ENCODE measurements at regions of chr18 and their contacts with region 1.

Region 1: GRCh38 chr18:63267975-63268721 is 51.4 kb downstream of the BCL2 start:
- DNase-seq: no peak
- H3K4me3 ChIP-seq: no peak overlapping the region
- H3K4me3 Mint-ChIP-seq: peak overlapping the region in 7 of 8 donors; percentile 8 to 75 (median 67)
- H3K27ac ChIP-seq: no peak overlapping the region
- H3K27ac Mint-ChIP-seq: peak overlapping the region; percentile 8 to 72 (median 50)
- H3K4me1 ChIP-seq: peaks cover 73% of the 10 kb centered on the region
- H3K4me1 Mint-ChIP-seq: peaks cover 48 to 88% (median 65%) of the 10 kb centered on the region in 4 donors
- H3K27me3 ChIP-seq: no peaks in the 10 kb centered on the region
- H3K27me3 Mint-ChIP-seq: no peaks in the 10 kb centered on the region

Region 2: GRCh38 chr18:63253428-63254372 is 14.4 kb before region 1 on chr18:
- CTCF ChIA-PET with region 1: interaction called, 4 read pairs
- POLR2A ChIA-PET with region 1: interaction called, 6 read pairs
- intact Hi-C with region 1: loop called (anchors 2 kb)
- DNase-seq: no peak
- H3K4me3 ChIP-seq: no peak overlapping the region
- H3K4me3 Mint-ChIP-seq: peak overlapping the region in 7 of 8 donors; percentile 3 to 83 (median 66)
- H3K27ac ChIP-seq: peak overlapping the region; percentile 4
- H3K27ac Mint-ChIP-seq: peak overlapping the region; percentile 37 to 83 (median 79)
- H3K4me1 ChIP-seq: peaks cover 77% of the 10 kb centered on the region
- H3K4me1 Mint-ChIP-seq: peaks cover 56 to 87% (median 68%) of the 10 kb centered on the region in 4 donors
- H3K27me3 ChIP-seq: no peaks in the 10 kb centered on the region
- H3K27me3 Mint-ChIP-seq: no peaks in the 10 kb centered on the region

Measured in CD4-positive, alpha-beta memory T cell (primary cell).